MCF 10A (cell line): ENCODE measurements at regions of chr11 and their contacts with region 1.

Region 1: DNA sequence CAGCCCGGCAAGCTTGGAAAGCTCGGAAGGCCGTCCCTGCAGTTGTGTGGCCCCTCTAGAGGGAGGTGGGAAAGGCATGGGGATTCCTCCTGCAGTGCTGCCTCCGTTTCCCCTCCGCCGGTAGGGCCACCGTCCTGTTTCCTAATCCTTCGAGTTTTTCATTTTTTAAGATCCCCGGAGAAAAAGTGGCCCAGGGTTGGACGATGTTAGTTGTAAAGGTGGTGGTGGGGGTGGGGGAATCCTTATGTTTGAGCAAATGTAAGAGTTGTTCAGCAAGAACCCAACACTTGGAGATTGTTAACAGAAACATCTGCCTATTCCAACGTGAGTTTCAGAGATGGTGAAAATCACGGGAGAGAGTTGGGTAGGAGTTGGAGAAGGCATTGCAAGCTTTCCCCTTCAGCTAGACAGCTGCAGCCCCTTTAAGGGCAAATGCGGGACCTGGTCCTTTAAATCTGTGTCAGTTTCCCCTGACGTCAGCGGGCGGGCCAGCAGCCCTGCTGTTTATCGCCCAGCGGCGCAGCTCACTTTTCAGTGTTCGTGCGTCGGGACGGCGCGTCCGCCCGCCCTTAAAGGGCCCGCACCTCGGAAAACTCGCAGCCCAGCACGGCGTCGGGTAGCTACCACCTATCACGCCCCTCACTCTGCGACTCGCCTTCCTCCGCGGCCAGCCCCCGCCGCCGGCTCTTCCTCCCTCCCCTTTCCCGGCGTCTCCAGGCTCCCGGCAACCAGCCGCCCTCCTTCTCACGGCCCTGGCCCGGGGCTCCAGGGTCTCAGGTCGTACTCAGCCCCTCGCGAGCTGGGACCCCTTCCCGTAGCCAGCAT is at the start of gene SIDT2:
- DNase-seq: peak; percentile 91
- H3K4me3 Mint-ChIP-seq: peak within 1 kb of the TSS; percentile 90
- H3K27ac Mint-ChIP-seq: peak within 1 kb of the TSS; percentile 87
- H3K4me1 Mint-ChIP-seq: peaks cover 11% of the 10 kb centered on the region
- H3K27me3 Mint-ChIP-seq: no peaks in the 10 kb centered on the region
- CTCF ChIP-seq: no peak
- total RNA-seq, gene SIDT2: 17.5 and 18.4 TPM in 2 replicates

Region 2: DNA sequence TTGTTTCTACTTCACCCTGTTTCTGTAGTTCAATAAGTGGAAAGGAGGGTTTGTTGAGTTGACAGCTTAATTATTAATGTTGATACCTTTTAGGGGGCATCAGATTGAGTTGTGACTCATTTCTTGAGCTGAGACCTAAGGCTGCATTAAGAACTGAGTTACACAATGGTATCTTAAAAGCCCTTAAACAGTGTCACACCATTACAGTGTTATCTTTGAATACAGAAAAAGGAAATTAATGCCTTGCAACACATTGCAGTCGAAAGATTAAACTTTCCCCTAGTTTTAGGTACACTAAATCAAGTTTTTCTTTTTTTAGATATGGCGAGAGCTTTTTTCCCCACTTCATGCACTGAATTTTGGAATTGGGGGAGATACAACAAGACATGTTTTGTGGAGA is 17.6 kb before region 1 on chr11:
- CTCF ChIA-PET with region 1: no interaction called
- POLR2A ChIA-PET with region 1: interaction called, 10 read pairs
- intact Hi-C with region 1: no loop called
- DNase-seq: no peak
- H3K4me3 Mint-ChIP-seq: no peak overlapping the region
- H3K27ac Mint-ChIP-seq: no peak overlapping the region
- H3K4me1 Mint-ChIP-seq: peaks cover 6% of the 10 kb centered on the region
- H3K27me3 Mint-ChIP-seq: no peaks in the 10 kb centered on the region
- CTCF ChIP-seq: no peak

Region 3: GRCh38 chr11:117197516-117198456 is 19.4 kb after region 1 on chr11:
- CTCF ChIA-PET with region 1: interaction called, 5 read pairs
- POLR2A ChIA-PET with region 1: interaction called, 15 read pairs
- intact Hi-C with region 1: no loop called
- DNase-seq: no peak
- H3K4me3 Mint-ChIP-seq: no peak overlapping the region
- H3K27ac Mint-ChIP-seq: no peak overlapping the region
- H3K4me1 Mint-ChIP-seq: no peaks in the 10 kb centered on the region
- H3K27me3 Mint-ChIP-seq: no peaks in the 10 kb centered on the region
- CTCF ChIP-seq: peak; percentile 28